ENCODE measurements at regions of chr7 and their contacts with region 1.

Region 1: GRCh38 chr7:150567169-150567568 is at the start of gene GIMAP4:
- DNase-seq: peak in 2 of 10 donors; percentile 36 to 47
- ATAC-seq: peak; percentile 37 to 49
- H3K4me3 Mint-ChIP-seq: peak within 1 kb of the TSS; percentile 83 to 100 (median 99)
- H3K27ac Mint-ChIP-seq: peak within 1 kb of the TSS; percentile 95 to 99 (median 97)
- H3K4me1 Mint-ChIP-seq: peaks cover 35 to 87% (median 79%) of the 10 kb centered on the region in 4 donors
- H3K27me3 Mint-ChIP-seq: no peaks in the 10 kb centered on the region
- polyA plus RNA-seq, gene GIMAP4: 233 to 526 (median 341) TPM

Region 2: DNA sequence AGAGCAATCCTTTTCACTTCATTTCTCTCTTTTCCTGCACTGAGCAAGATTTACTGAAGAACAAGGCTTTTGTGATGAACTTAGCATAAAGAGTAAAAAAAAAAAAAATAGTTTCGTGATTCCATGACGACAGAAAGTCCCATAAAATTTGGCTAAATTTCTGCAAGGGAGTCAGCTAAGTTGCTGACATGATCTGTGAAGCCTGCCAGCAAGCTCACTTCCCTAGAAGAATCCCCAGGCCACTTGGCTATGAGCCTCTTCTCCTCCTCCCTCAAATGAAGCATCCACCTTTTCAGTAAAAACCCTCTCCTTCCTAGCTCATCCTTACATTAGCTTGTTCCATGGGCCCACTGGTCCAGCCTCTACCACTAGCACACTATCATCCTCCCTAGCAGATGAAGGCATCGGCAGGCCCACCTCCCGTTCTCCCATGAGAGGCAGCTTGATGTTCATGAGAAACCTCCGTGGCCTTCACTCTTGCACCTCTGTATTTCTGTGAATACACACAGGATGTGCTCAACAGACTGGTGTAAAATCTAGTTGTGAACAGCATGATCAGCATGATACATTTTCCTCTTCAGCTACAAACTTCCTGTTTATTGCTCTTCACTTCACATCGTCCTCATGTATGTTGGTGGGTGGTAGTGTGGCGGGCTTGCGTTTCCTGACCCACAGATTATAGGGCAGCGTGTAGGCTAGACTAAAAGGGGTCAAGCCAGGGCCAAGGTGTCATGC is 85.8 kb before region 1 on chr7:
- POLR2A ChIA-PET with region 1: interaction called, 90 read pairs
- DNase-seq: peak; percentile 25 to 76 (median 63)
- ATAC-seq: peak; percentile 51 to 69
- H3K4me3 Mint-ChIP-seq: peak overlapping the region; percentile 71 to 97 (median 88)
- H3K27ac Mint-ChIP-seq: peak overlapping the region; percentile 98 to 100 (median 100)
- H3K4me1 Mint-ChIP-seq: peaks cover 57 to 98% (median 94%) of the 10 kb centered on the region in 4 donors
- H3K27me3 Mint-ChIP-seq: no peaks in the 10 kb centered on the region

Region 3: GRCh38 chr7:150531704-150532103 is 35.5 kb before region 1 on chr7:
- POLR2A ChIA-PET with region 1: interaction called, 37 read pairs
- DNase-seq: no peak
- ATAC-seq: no peak
- H3K4me3 Mint-ChIP-seq: peak overlapping the region in 1 of 10 donors; percentile 15
- H3K27ac Mint-ChIP-seq: peak overlapping the region in 1 of 10 donors; percentile 55
- H3K4me1 Mint-ChIP-seq: peaks cover 16 to 51% (median 21%) of the 10 kb centered on the region in 4 donors
- H3K27me3 Mint-ChIP-seq: no peaks in the 10 kb centered on the region

Region 4: DNA sequence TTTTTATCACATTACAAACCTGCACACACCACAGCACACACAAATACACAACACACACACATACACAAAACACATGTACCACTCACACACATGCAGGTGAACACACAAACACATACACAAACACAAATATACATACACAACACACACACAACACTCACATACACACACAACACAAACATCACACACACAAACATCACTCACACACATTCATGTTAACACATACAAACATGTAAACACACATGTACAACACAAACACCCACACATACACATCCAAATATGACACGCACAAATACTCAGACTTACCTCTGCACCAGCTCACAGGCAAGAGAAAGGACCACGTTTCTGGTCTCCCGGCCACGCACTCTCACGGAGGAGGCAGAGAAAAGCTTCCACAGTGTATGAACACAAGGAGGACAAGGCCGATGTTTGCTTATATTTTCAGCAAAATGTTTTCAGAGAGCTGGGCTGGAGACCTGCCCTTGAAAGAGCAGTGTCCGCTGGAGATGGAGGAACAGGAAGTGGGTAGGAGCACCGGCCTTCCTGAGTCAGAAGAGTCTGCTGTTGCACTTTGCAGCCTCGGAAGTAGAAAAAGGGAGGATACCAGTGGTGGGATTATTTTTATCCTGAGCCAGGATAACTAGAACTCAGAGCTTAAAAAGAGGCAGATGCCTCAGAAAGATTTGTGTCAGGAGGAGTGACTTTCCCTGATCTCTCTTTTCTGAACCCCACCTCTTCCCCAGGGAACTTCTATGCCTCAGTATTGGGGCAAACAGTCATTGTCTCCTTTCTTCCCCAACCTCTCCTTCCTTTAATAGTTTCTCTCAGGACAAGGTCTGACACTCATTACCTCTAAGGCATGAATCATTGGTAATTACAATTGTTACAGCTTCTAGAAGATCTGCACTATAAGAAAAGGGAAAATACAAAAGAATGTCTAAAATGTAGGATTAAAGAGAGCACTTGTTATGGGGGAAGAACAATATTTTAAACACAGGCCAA is 65.0 kb after region 1 on chr7 and contains the start of gene GIMAP6:
- POLR2A ChIA-PET with region 1: interaction called, 385 read pairs
- DNase-seq: peak; percentile 7 to 69 (median 32)
- ATAC-seq: peak; percentile 59 to 72
- H3K4me3 Mint-ChIP-seq: peak within 1 kb of the TSS; percentile 92 to 98 (median 96)
- H3K27ac Mint-ChIP-seq: peak within 1 kb of the TSS; percentile 90 to 98 (median 96)
- H3K4me1 Mint-ChIP-seq: peaks cover 41 to 87% (median 84%) of the 10 kb centered on the region in 4 donors
- H3K27me3 Mint-ChIP-seq: no peaks in the 10 kb centered on the region
- polyA plus RNA-seq, gene GIMAP6: 115 to 173 (median 121) TPM

Region 5: GRCh38 chr7:150675714-150676113 is 108.5 kb after region 1 on chr7:
- POLR2A ChIA-PET with region 1: interaction called, 47 read pairs
- DNase-seq: no peak
- ATAC-seq: no peak
- H3K4me3 Mint-ChIP-seq: peak overlapping the region; percentile 16 to 81 (median 61)
- H3K27ac Mint-ChIP-seq: peak overlapping the region; percentile 91 to 99 (median 95)
- H3K4me1 Mint-ChIP-seq: peaks cover 24 to 80% (median 77%) of the 10 kb centered on the region in 4 donors
- H3K27me3 Mint-ChIP-seq: no peaks in the 10 kb centered on the region

Region 6: GRCh38 chr7:150737265-150738055 is 170.3 kb after region 1 on chr7 and contains the start of gene GIMAP5:
- POLR2A ChIA-PET with region 1: interaction called, 138 read pairs
- DNase-seq: peak in 6 of 10 donors; percentile 27 to 60 (median 40)
- ATAC-seq: peak; percentile 67 to 76
- H3K4me3 Mint-ChIP-seq: peak within 1 kb of the TSS; percentile 88 to 100 (median 98)
- H3K27ac Mint-ChIP-seq: peak within 1 kb of the TSS; percentile 93 to 100 (median 96)
- H3K4me1 Mint-ChIP-seq: peaks cover 48 to 75% (median 68%) of the 10 kb centered on the region in 4 donors
- H3K27me3 Mint-ChIP-seq: no peaks in the 10 kb centered on the region
- polyA plus RNA-seq, gene GIMAP5: 320 to 506 (median 401) TPM

Region 7: GRCh38 chr7:150845421-150845861 is 278.3 kb after region 1 on chr7:
- POLR2A ChIA-PET with region 1: no interaction called
- DNase-seq: peak in 1 of 10 donors; percentile 35
- ATAC-seq: no peak
- H3K4me3 Mint-ChIP-seq: no peak overlapping the region
- H3K27ac Mint-ChIP-seq: peak overlapping the region in 1 of 10 donors; percentile 73
- H3K4me1 Mint-ChIP-seq: peaks cover 0 to 2% (median 0%) of the 10 kb centered on the region in 4 donors
- H3K27me3 Mint-ChIP-seq: peaks cover 0 to 4% (median 0%) of the 10 kb centered on the region in 5 donors